ENCODE measurements at regions of chr7 and their contacts with region 1.

Region 1: DNA sequence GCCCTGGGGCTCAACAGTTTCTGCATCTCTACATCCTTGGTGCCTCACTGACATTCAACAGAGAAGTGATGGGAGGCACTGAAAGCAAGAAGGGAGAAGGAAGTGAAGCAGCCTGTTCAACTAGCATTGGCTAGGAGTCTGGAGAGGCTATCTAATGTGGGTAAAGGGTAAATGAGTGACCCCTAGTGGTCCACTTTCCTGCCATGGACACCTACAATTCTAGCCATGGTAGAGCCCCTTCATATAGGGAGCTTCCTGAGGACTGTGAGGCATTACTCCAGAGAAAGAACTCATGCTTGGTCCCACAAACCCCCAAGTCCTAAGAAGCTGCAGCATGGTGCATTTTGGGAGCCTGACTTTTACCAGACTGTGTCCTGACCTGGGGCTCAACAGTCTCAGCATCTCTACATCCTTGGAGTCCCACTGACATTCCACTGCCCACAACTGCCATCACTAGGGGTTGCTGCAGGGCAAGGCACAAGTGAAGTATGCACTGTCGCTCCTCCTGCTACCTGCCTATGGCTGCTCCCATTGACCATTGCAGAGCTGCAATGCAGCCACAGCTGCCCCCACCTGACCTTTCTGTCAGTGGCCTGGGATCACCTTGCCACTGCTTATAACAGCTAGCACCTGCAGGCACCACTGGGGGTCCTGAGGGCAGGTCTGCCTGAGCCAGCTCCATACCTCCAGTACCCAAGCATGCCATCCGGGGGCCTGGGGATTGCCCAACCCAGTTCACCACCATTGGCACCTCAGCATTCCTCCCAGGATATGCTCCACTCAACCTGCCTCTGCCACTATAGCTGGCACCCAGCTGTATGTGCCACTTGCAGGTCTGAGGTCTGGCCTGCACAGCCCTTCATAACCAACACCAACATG is 44.1 kb upstream of the CDK6 start:
- DNase-seq: peak; percentile 62
- ATAC-seq: peak; percentile 99
- H3K4me3 ChIP-seq: no peak overlapping the region
- H3K27ac ChIP-seq: no peak overlapping the region
- H3K4me1 ChIP-seq: no peaks in the 10 kb centered on the region
- H3K27me3 ChIP-seq: no peaks in the 10 kb centered on the region
- CTCF ChIP-seq: peak; percentile 64
- EP300 ChIP-seq: no peak
- POLR2A ChIP-seq: no peak
- RAD21 ChIP-seq: peak; percentile 36; the same call in 1 of the 2 replicates

Region 2: GRCh38 chr7:92621026-92621540 is 259.4 kb before region 1 on chr7:
- CTCF ChIA-PET with region 1: interaction called, 7 read pairs
- POLR2A ChIA-PET with region 1: no interaction called
- in situ Hi-C with region 1: no loop called
- intact Hi-C with region 1: loop called (anchors 1 kb)
- DNase-seq: peak; percentile 41
- ATAC-seq: peak; percentile 85
- H3K4me3 ChIP-seq: no peak overlapping the region
- H3K27ac ChIP-seq: peak overlapping the region; percentile 4
- H3K4me1 ChIP-seq: no peaks in the 10 kb centered on the region
- H3K27me3 ChIP-seq: no peaks in the 10 kb centered on the region
- CTCF ChIP-seq: peak; percentile 66
- EP300 ChIP-seq: no peak
- POLR2A ChIP-seq: no peak
- RAD21 ChIP-seq: peak; percentile 53

Region 3: GRCh38 chr7:92691578-92691977 is 188.9 kb before region 1 on chr7:
- CTCF ChIA-PET with region 1: interaction called, 5 read pairs
- POLR2A ChIA-PET with region 1: no interaction called
- in situ Hi-C with region 1: no loop called
- intact Hi-C with region 1: loop called (anchors 1 kb)
- DNase-seq: peak; percentile 68
- ATAC-seq: no peak
- H3K4me3 ChIP-seq: no peak overlapping the region
- H3K27ac ChIP-seq: peak overlapping the region; percentile 23
- H3K4me1 ChIP-seq: peaks cover 55% of the 10 kb centered on the region
- H3K27me3 ChIP-seq: no peaks in the 10 kb centered on the region
- CTCF ChIP-seq: peak; percentile 50; the same call in 1 of the 2 replicates
- EP300 ChIP-seq: no peak
- POLR2A ChIP-seq: no peak
- RAD21 ChIP-seq: peak; percentile 43; the same call in 1 of the 2 replicates

Region 4: DNA sequence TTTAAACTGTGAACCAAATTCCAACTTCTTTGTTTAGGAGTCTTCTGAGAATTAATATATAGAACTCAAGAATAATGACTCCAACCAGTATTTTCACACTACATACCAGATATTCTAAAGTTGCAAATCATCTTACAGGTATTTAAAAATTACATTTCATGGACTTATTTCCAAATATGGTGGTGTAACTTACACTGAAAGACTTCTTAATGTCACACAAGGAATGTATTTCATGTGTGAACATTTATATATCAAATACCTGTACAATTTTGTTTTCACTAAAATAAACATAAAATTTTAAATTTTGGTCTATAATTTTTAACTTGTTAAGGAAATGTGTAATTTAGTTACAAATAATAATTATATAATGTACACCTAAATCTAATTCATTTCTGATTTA is 41.5 kb before region 1 on chr7:
- CTCF ChIA-PET with region 1: no interaction called
- POLR2A ChIA-PET with region 1: no interaction called
- in situ Hi-C with region 1: no loop called
- intact Hi-C with region 1: loop called (anchors 1 kb)
- DNase-seq: no peak
- ATAC-seq: no peak
- H3K4me3 ChIP-seq: no peak overlapping the region
- H3K27ac ChIP-seq: no peak overlapping the region
- H3K4me1 ChIP-seq: 0 out of 2 replicates have a peak, but pooled peaks cover 5% of the 10 kb centered on the region
- H3K27me3 ChIP-seq: no peaks in the 10 kb centered on the region; a peak in 1 of 5 replicates
- CTCF ChIP-seq: no peak
- EP300 ChIP-seq: no peak
- POLR2A ChIP-seq: no peak
- RAD21 ChIP-seq: no peak

Region 5: DNA sequence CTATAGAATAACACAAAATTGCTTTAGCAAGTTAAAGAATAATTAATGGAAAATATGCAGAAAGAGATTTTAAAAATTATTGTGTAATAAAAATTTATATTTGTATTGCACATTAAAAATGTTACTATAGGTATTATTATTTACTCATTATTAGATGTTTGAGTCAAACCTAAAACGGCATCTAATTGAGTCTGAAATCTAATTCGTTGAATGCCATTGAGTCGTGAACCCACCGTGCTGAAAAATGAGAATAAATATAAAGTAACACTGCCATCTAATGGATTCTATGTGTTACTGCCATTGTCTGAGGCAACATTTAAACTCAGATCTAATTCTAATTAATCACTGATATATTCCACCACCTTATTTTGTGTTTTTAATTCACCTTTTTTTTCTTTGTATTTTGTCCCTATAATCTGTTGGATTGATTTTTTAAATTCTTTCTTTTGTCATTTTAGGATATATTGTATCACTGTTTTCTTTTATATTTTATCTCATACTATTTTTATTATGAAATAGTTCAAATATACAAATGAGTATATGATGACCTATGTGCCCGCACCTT is 175.2 kb after region 1 on chr7:
- CTCF ChIA-PET with region 1: no interaction called
- POLR2A ChIA-PET with region 1: no interaction called
- in situ Hi-C with region 1: no loop called
- intact Hi-C with region 1: loop called (anchors 1 kb)
- DNase-seq: peak; percentile 34
- ATAC-seq: no peak
- H3K4me3 ChIP-seq: no peak overlapping the region
- H3K27ac ChIP-seq: no peak overlapping the region
- H3K4me1 ChIP-seq: peaks cover 10% of the 10 kb centered on the region; the same call in 1 of the 2 replicates
- H3K27me3 ChIP-seq: peaks cover 0 to 3% of the 10 kb centered on the region in 2 experiments; a peak in 1 of 5 replicates
- CTCF ChIP-seq: peak; percentile 70
- EP300 ChIP-seq: no peak
- POLR2A ChIP-seq: no peak
- RAD21 ChIP-seq: peak; percentile 58

Region 6: GRCh38 chr7:93228302-93228701 is 347.9 kb after region 1 on chr7:
- CTCF ChIA-PET with region 1: no interaction called
- POLR2A ChIA-PET with region 1: no interaction called
- in situ Hi-C with region 1: no loop called
- intact Hi-C with region 1: loop called (anchors 5 kb)
- DNase-seq: peak; percentile 56
- ATAC-seq: no peak
- H3K4me3 ChIP-seq: no peak overlapping the region
- H3K27ac ChIP-seq: no peak overlapping the region
- H3K4me1 ChIP-seq: peaks cover 6% of the 10 kb centered on the region; the same call in 1 of the 2 replicates
- H3K27me3 ChIP-seq: no peaks in the 10 kb centered on the region; a peak in 1 of 5 replicates
- CTCF ChIP-seq: peak; percentile 61
- EP300 ChIP-seq: no peak
- POLR2A ChIP-seq: no peak
- RAD21 ChIP-seq: no peak